Activated naive CD4-positive, alpha-beta T cell treated with anti-CD3 and anti-CD28 coated beads for 36 hours (primary cell): ENCODE measurements at regions of chr4 and their contacts with region 1.

Region 1: GRCh38 chr4:184417802-184418511 is 56.4 kb downstream of the IRF2 start:
- DNase-seq: peak; percentile 27
- H3K4me3 Mint-ChIP-seq: no peak overlapping the region
- H3K27ac Mint-ChIP-seq: peak overlapping the region; percentile 73
- H3K4me1 Mint-ChIP-seq: peaks cover 84% of the 10 kb centered on the region
- H3K27me3 Mint-ChIP-seq: no peaks in the 10 kb centered on the region

Region 2: DNA sequence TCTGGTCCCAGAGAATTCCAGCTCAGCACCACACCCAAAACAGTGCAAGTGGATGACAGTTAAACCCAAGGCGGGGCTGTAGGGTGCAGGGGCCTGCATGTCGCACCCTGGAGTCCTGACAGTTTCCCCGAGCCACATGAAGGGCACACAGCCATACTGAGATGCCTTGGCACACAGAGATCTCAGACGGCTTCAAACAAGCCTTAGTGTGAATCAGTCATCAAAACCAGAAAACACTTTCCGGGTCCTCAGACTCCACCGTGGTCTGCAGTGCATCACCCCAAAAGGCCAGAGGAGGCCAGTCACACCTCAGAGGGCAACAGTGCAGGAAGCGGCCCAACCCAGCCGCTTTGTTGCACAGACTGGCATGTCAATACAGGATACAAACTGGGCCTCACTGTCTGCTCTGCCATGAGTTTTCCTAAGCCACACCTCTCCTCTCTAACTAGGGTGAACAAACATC is 135.7 kb before region 1 on chr4:
- CTCF ChIA-PET with region 1: interaction called, 4 read pairs
- intact Hi-C with region 1: loop called (anchors 1 kb)
- DNase-seq: peak; percentile 82
- H3K4me3 Mint-ChIP-seq: no peak overlapping the region
- H3K27ac Mint-ChIP-seq: peak overlapping the region; percentile 85
- H3K4me1 Mint-ChIP-seq: peaks cover 64% of the 10 kb centered on the region
- H3K27me3 Mint-ChIP-seq: peaks cover 4% of the 10 kb centered on the region

Region 3: DNA sequence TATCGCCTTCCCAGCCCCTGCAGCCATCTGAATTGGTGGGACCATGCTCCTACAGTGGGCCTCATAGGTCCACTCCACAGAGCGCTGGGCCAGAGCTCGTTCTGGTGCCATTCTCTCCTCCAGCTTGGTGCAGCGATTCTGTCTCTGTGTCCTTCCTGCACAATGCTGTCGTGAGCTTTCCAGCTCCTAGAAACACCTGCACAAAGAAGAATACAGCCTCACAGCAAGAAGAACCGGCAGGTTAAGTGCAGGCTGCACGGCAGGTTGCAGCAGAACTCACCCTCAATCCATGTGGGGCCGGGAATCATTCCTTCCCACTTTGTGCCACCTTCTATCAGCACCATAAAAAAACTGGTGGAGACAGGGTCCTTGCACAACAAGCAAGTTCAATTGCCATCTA is 99.1 kb before region 1 on chr4:
- CTCF ChIA-PET with region 1: no interaction called
- intact Hi-C with region 1: loop called (anchors 1 kb)
- DNase-seq: no peak
- H3K4me3 Mint-ChIP-seq: no peak overlapping the region
- H3K27ac Mint-ChIP-seq: no peak overlapping the region
- H3K4me1 Mint-ChIP-seq: peaks cover 36% of the 10 kb centered on the region
- H3K27me3 Mint-ChIP-seq: peaks cover 2% of the 10 kb centered on the region

Region 4: DNA sequence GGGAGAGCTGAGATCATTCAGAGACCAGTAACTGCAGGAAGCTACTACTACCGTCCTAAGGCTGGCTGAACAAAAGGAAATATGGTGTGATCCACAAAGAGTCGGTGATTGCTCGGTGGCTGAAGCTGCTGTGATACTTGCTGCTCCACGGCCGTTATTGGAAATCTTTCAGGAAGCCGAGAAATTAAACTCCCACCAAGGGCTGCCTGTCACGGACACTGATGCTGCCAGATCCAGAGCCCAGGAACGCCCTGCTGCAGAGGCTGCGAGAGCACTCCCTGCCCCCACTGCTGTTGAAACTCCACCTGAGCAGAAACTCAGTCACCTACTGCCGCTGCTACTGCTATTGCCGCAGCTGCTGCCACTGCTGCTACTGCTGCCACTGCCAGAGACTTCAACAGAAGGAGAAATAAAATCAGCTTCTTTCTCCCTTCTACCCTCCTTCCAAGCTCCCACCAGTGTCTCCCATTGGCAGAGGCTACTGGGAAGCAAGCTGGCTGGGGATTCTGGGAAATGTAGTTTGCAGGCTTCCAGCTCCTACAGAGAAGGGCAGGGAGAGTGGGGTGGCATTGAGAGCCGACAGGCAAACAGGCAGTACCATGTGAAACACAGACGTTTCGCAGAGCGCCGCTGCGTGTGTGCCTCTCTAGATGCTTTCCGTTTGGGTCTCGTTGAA is 74.3 kb before region 1 on chr4:
- CTCF ChIA-PET with region 1: no interaction called
- intact Hi-C with region 1: loop called (anchors 2 kb)
- DNase-seq: peak; percentile 61
- H3K4me3 Mint-ChIP-seq: peak overlapping the region; percentile 77
- H3K27ac Mint-ChIP-seq: peak overlapping the region; percentile 60
- H3K4me1 Mint-ChIP-seq: peaks cover 14% of the 10 kb centered on the region
- H3K27me3 Mint-ChIP-seq: peaks cover 3% of the 10 kb centered on the region

Region 5: GRCh38 chr4:184453365-184454160 is 35.6 kb after region 1 on chr4:
- CTCF ChIA-PET with region 1: interaction called, 3 read pairs
- intact Hi-C with region 1: loop called (anchors 1 kb)
- DNase-seq: peak; percentile 69
- H3K4me3 Mint-ChIP-seq: peak overlapping the region; percentile 65
- H3K27ac Mint-ChIP-seq: peak overlapping the region; percentile 86
- H3K4me1 Mint-ChIP-seq: peaks cover 69% of the 10 kb centered on the region
- H3K27me3 Mint-ChIP-seq: no peaks in the 10 kb centered on the region

Region 6: DNA sequence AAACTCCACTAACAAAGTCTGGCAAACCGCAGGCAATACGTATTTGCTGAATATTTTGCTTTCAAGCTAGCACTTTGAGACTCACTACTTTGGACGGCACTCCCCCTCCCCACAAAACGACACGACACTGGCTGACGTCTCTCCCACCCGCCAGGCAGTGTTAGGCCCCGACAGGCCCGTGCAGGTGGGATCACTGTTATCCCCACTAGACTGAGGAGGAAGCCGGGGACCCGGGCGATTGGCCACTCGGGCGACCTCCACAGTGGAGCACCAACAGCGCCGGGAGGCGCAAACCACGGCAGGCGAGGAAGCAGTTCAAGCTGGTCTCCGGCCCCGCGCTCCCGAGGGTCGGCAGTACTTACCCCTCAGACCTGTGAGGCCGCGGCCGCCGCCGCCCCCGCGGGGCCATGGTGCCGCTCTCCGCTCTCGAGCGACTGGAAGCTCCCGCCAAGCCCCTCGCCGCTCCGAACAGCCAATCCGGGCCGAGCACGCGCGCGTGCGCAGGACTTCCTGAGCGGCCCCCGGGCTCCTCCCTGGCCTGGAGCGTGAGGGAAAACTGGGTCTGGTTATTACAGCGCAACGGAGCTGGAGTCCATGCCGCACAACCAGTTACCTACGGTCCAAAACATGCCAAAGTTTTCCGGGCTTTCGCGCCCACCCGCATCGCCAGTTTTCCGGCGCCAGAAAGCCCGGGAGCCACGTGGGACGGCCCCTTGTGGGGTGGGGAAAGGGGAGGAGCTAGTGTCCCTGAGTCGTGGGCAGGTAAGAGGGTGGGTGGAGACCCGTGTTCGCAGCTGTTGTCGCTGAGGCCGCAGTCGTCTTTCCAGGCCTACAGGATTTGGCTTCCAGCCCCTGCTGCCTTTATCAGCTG is 315.9 kb after region 1 on chr4 and contains the start of gene CENPU:
- CTCF ChIA-PET with region 1: no interaction called
- intact Hi-C with region 1: loop called (anchors 1 kb)
- DNase-seq: peak; percentile 97
- H3K4me3 Mint-ChIP-seq: peak within 1 kb of the TSS; percentile 97
- H3K27ac Mint-ChIP-seq: peak within 1 kb of the TSS; percentile 86
- H3K4me1 Mint-ChIP-seq: peaks cover 19% of the 10 kb centered on the region
- H3K27me3 Mint-ChIP-seq: no peaks in the 10 kb centered on the region
- total RNA-seq, gene CENPU: 78.7 to 91.5 TPM